ENCODE measurements at regions of chr12 and their contacts with region 1.

Region 1: DNA sequence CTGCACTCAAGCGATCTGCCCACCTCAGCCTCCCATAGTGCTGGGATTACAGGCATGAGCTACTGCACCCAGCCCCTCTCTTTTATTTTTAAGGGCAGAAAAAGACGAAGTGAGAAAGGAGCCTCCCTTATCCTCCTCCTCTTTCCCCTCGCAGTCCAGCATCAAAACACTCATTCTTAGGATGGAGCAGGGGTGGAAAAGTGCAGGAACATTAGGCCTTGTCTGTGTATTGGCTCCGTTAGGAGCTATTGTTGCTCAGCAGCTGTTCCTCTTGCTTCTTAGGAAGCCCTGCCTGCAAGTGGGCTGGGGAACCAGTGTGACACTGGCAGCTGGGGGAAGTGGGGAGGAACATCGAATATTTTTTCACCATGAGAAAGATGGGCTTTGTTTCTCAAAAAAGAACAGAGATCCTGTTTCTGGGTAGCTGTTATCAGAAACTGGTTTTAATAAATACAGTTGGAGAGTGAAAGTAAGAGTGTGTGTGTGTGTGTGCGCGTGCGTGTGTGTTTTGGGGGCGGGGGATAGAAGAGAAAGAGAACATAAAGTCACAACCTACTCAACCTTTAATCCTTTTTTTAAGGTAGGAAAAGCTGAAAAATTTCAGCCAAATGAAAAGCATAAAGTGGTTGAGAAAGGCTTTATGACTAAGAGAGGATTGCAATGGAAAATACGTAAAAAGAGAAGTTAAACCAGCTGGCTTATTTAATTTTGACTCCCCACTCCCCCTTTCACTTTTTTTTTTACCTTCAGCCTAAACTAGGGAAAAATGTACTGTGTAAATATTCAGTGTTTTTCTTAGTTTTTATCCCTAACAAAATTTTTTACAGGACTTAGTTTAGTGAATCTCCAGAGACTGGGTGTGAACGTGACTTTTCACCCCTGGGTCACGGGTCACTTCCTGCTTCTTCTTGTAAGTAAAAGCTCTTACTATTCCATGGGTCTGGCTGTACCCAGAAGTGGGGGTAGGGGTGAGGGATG is 197.2 kb upstream of the PLEKHG7 start:
- DNase-seq: peak; percentile 56
- ATAC-seq: peak; percentile 70
- H3K4me3 Mint-ChIP-seq: peak overlapping the region; percentile 69
- H3K27ac Mint-ChIP-seq: peak overlapping the region; percentile 92
- H3K4me1 Mint-ChIP-seq: peaks cover 44% of the 10 kb centered on the region
- H3K27me3 Mint-ChIP-seq: no peaks in the 10 kb centered on the region

Region 2: DNA sequence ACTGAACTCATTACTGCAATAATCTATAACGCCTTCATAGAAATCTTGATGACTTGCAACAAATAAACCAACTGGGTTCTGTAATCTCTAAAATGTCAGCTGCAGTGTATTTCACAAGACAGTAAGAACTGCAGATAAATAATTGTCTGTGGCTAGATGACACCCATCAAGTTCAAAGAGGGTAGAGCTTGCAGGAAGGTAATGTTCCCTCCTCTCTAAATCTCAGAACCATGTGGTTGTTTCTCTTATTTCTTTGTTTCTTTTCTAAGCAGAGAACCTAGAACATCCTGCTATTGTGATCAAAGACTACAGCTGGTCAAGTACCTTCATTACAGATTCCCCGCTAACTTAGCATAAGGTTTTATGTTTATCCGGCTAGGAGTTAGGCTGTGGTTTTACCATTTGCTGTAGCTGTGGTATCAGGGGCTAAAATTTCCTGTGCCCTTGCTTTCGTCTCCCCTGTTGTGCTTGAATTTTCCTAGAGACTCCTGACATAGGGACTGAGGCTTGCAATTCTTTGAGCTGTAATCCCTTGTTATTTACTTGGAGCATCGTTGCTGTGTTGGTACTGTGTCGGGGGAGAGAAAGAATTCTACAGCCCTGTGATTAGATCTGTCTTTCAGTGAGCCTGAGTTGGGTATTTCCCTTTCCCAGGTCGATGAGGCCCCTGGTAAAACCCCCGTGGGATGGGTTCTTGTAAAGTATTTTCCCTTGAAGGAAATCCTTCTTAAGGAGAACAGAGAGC is 106.8 kb before region 1 on chr12:
- CTCF ChIA-PET with region 1: interaction called, 10 read pairs
- POLR2A ChIA-PET with region 1: interaction called, 10 read pairs
- DNase-seq: peak; percentile 38
- ATAC-seq: peak; percentile 83
- H3K4me3 Mint-ChIP-seq: peak overlapping the region; percentile 57
- H3K27ac Mint-ChIP-seq: peak overlapping the region; percentile 88
- H3K4me1 Mint-ChIP-seq: peaks cover 85% of the 10 kb centered on the region
- H3K27me3 Mint-ChIP-seq: no peaks in the 10 kb centered on the region

Region 3: DNA sequence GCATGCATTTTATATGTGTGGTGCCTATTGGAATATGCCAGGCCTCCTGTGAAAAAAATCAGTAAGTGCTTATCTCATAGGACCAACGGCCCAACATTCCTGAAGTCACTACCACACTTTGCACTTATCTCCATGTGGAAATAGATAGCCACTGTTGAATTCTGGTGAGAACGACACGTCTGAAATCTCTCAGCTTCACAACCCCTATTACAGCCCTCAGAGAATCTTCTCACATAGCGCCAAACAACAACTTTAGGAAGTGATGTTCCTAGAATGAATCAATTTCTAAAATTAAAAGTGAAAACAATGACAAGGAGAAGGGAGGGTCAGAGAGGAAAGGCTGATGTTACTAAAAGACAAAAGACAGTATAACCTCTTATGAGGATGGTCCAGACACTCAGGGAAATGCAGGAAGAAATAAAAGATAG is 89.1 kb before region 1 on chr12:
- CTCF ChIA-PET with region 1: no interaction called
- POLR2A ChIA-PET with region 1: no interaction called
- DNase-seq: no peak
- ATAC-seq: no peak
- H3K4me3 Mint-ChIP-seq: no peak overlapping the region
- H3K27ac Mint-ChIP-seq: no peak overlapping the region
- H3K4me1 Mint-ChIP-seq: no peaks in the 10 kb centered on the region
- H3K27me3 Mint-ChIP-seq: no peaks in the 10 kb centered on the region

Region 4: DNA sequence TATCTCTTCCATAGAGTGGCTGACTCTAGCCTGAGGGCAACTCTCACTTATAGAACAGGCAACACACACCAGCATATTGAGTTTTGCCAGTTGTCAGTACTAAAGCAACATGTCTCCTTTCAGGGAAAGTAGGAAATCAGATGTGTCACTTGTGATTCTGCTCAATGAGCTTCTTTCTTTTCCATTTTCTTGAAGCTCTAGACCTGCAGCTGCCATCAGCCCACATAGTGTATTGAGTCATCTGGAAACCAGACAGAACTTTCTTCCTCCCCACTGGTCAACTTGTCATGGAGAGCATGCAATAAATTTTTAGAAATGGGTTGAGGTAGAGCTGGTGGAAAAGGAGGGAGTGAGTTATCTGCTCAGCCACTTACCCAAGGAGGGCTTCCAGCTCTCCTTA is 11.7 kb before region 1 on chr12:
- CTCF ChIA-PET with region 1: interaction called, 11 read pairs
- POLR2A ChIA-PET with region 1: interaction called, 19 read pairs
- DNase-seq: no peak
- ATAC-seq: no peak
- H3K4me3 Mint-ChIP-seq: no peak overlapping the region
- H3K27ac Mint-ChIP-seq: no peak overlapping the region
- H3K4me1 Mint-ChIP-seq: peaks cover 19% of the 10 kb centered on the region
- H3K27me3 Mint-ChIP-seq: no peaks in the 10 kb centered on the region

Region 5: DNA sequence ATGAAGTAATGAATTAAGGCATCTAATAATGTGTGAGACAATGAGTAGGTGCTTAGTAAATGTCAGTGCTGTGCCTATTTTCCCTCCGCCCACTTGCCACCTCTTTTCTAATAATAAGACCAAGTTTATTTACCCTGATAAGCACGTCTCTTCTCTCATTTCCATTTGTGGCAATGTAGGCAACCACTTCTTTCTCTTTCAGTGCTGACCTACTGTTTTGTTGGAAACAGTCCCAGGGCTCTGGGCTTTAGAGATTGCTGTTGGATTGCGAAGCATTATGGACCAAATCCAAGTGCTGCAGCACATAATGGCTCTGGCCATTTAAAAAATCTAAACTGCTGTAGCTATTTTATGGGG is 56.0 kb after region 1 on chr12:
- CTCF ChIA-PET with region 1: interaction called, 19 read pairs
- POLR2A ChIA-PET with region 1: interaction called, 3 read pairs
- DNase-seq: no peak
- ATAC-seq: no peak
- H3K4me3 Mint-ChIP-seq: no peak overlapping the region
- H3K27ac Mint-ChIP-seq: no peak overlapping the region
- H3K4me1 Mint-ChIP-seq: peaks cover 20% of the 10 kb centered on the region
- H3K27me3 Mint-ChIP-seq: no peaks in the 10 kb centered on the region

Region 6: DNA sequence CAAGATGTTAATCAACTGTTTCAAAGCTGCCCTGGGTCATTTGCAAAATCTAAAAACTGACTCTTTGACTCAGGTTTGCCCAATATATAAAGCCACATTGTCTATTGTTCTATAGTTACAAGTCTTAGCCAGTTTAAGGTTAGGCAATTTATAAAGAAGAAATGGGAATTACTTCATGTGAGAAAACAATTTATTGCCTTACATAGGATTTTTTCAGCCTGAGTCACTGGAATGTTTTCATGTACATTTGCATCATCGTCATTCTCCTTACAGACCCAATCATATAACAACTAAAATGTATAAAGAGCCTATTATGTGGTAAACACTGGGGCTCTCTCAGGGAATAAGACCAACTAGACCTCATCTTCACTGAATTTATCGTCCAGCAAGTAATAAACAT is 96.9 kb after region 1 on chr12:
- CTCF ChIA-PET with region 1: no interaction called
- POLR2A ChIA-PET with region 1: no interaction called
- DNase-seq: no peak
- ATAC-seq: no peak
- H3K4me3 Mint-ChIP-seq: no peak overlapping the region
- H3K27ac Mint-ChIP-seq: no peak overlapping the region
- H3K4me1 Mint-ChIP-seq: peaks cover 6% of the 10 kb centered on the region
- H3K27me3 Mint-ChIP-seq: no peaks in the 10 kb centered on the region